Right ventricle myocardium inferior (tissue), 1 donor: ENCODE measurements at regions of chr2 and their contacts with region 1.

Region 1: GRCh38 chr2:201185863-201186262 is 2.9 kb downstream of the CASP10 start:
- DNase-seq: no peak
- ATAC-seq: no peak

Region 2: GRCh38 chr2:201220102-201220570 is 34.3 kb after region 1 on chr2:
- intact Hi-C with region 1: loop called (anchors 5 kb)
- DNase-seq: no peak
- ATAC-seq: peak; percentile 31

Region 3: GRCh38 chr2:201735486-201735885 is 549.6 kb after region 1 on chr2:
- intact Hi-C with region 1: no loop called
- DNase-seq: no peak
- ATAC-seq: no peak